Activated CD4-positive, alpha-beta T cell treated with anti-CD3 and anti-CD28 coated beads for 36 hours (primary cell): ENCODE measurements at regions of chr17 and their contacts with region 1.

Region 1: DNA sequence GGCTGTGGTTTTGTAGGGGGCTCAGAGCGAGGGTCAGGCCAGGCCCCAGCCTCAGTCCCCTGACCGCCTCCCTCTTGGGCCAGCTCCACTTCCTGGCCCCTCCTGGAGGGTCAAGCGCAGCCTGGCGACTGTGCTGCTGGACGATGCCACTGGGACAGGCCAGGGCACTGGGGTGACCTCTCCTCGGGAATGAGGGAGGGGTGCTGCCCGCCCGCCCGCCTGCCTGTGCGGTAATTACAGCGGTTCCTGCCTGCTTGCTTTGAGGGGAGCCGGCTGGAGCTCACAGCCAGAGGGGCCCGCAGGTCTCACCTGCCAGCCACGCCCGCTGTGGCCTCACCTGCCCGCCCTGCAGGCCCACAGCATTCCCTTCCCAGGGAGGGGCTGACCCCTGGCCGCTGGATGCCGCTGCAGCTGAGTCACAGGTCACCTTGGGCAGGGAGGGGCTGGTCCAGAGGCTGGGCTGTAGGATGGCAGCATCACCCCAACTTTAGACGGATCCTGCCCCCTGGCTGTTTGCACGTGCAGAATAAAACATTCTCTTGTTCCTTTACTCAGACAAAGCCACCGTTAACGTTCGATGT is 76.7 kb upstream of the CBX4 start:
- DNase-seq: peak; percentile 51
- ATAC-seq: no peak
- H3K4me3 Mint-ChIP-seq: no peak overlapping the region
- H3K27ac Mint-ChIP-seq: no peak overlapping the region
- H3K4me1 Mint-ChIP-seq: no peaks in the 10 kb centered on the region
- H3K27me3 Mint-ChIP-seq: peaks cover 2% of the 10 kb centered on the region

Region 2: DNA sequence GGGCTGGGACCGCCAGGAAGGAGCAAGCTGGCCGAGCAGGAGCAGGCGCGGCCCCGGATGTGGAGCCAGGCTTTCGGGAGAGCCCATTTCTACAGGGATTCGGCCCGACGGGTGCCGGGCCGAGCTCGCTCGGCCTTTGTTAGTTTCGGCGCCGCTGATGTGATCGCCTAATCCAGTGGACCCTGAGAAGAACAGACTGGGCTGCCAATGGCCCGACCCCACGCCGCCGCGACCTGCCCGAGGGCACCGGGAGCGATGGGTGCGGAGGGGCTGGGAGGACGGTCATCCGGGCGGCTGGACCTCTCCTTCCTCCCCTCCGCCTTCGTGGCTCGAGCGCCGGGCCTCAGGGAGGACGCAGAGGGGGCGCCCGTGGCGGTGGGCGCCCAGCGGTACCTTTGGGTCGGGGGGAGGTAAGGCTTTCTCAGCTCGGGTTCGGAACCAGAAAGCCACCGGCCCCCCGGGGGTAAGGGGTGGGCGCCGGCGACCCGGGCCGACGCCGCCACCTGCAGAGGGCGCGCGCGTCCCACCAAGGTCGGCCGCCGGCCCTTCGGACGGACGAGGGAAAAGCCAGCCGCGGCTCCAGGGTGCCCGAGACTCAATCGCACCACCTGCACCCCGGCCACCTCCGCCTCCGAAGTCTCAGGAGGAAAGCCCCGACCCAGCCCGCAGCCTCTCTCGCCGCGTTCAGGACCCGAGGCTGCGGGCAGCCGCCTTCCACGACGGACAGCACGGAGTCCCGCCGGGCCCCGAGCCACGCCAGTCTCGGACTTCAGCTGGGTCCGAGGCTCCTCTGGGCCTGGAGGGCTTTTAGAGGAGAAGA is 126.2 kb before region 1 on chr17:
- CTCF ChIA-PET with region 1: interaction called, 3 read pairs
- POLR2A ChIA-PET with region 1: no interaction called
- intact Hi-C with region 1: loop called (anchors 1 to 5 kb)
- DNase-seq: peak; percentile 56
- ATAC-seq: peak; percentile 33
- H3K4me3 Mint-ChIP-seq: no peak overlapping the region
- H3K27ac Mint-ChIP-seq: no peak overlapping the region
- H3K4me1 Mint-ChIP-seq: peaks cover 4% of the 10 kb centered on the region
- H3K27me3 Mint-ChIP-seq: peaks cover 49% of the 10 kb centered on the region

Region 3: GRCh38 chr17:79902146-79902791 is 13.7 kb before region 1 on chr17:
- CTCF ChIA-PET with region 1: no interaction called
- POLR2A ChIA-PET with region 1: no interaction called
- intact Hi-C with region 1: no loop called
- DNase-seq: no peak
- ATAC-seq: no peak
- H3K4me3 Mint-ChIP-seq: no peak overlapping the region
- H3K27ac Mint-ChIP-seq: no peak overlapping the region
- H3K4me1 Mint-ChIP-seq: no peaks in the 10 kb centered on the region
- H3K27me3 Mint-ChIP-seq: peaks cover 8% of the 10 kb centered on the region